Activated naive CD4-positive, alpha-beta T cell treated with anti-CD3 and anti-CD28 coated beads for 36 hours (primary cell): ENCODE measurements at regions of chr9 and their contacts with region 1.

Region 1: DNA sequence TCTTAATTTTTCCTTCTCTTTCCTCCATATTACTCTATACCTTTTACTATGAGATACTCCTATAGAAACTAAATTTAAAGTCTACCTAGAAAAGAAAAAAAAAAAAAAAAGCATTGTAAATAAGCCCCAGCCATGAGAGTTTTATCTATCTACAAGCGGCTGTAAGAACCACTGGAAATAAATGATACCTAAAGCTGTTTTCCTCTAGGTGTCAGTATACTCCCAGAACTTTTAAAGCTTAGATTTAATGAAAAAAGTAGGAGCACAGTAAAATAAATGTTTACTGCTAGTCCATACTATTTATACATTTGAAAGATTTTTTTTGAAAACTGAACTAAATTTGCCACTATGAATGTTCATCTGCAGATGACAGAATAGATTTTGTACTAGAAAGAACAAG is 26.2 kb downstream of the TYRP1 start:
- DNase-seq: no peak
- H3K4me3 Mint-ChIP-seq: no peak overlapping the region
- H3K27ac Mint-ChIP-seq: no peak overlapping the region
- H3K4me1 Mint-ChIP-seq: no peaks in the 10 kb centered on the region
- H3K27me3 Mint-ChIP-seq: no peaks in the 10 kb centered on the region

Region 2: DNA sequence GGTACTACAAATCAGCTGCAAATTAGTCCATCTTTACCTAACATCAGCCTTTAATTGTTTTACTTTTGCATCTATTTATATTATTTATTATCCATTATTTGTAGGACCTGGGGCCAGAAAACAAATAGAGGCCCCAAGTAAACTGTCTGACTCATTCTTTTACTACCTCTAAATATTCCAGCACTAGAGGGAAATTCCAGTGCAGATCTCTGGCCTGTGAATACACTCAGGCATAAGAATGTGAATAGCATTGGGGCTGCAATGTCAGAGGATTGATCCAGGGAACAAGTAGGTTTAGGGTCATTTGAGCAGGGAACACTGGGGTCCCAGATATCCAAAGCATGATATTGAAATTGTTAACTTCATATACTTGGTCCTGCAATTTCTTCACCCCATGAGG is 202.9 kb before region 1 on chr9:
- CTCF ChIA-PET with region 1: no interaction called
- intact Hi-C with region 1: no loop called
- DNase-seq: no peak
- H3K4me3 Mint-ChIP-seq: no peak overlapping the region
- H3K27ac Mint-ChIP-seq: no peak overlapping the region
- H3K4me1 Mint-ChIP-seq: no peaks in the 10 kb centered on the region
- H3K27me3 Mint-ChIP-seq: no peaks in the 10 kb centered on the region

Region 3: DNA sequence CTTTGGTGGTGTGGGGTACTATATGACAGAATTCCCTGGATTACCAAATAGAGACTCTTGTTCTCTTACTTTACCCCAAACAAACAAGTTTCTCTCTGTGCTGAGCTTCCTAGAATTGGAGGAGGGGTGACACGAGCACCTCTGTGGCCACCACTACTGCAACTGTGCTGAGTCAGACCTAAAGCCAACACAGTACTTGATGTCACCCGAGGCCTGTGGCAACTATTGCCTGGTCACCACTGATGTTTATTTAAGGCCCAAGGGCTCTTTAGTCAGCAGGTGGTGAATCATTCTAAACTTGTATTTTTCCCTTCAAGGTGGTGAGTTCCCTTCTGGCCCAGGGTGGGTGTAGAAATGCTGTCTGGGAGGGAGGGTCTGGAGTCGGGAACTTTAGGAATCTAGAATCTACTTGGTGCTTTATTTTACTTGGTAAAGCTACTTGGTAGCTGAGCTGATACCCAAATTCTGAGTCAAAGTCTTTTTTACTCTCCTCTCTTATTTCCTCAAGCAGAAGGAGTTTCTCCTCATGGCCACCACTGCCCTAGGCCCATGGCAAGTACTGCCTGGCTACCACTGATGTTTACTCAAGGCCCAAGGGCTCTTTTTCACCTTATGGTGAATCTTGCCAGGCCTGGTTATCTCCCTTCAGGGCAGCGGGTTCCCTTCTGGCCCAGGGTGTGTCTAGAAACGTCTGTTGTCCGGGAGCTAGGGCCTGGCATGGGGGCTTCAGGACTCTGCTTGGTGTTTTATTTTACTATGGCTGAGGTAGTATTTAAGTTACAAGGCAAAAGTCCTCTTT is 65.2 kb after region 1 on chr9:
- CTCF ChIA-PET with region 1: no interaction called
- intact Hi-C with region 1: no loop called
- DNase-seq: no peak
- H3K4me3 Mint-ChIP-seq: no peak overlapping the region
- H3K27ac Mint-ChIP-seq: no peak overlapping the region
- H3K4me1 Mint-ChIP-seq: no peaks in the 10 kb centered on the region
- H3K27me3 Mint-ChIP-seq: no peaks in the 10 kb centered on the region

Region 4: GRCh38 chr9:13088720-13089427 is 369.4 kb after region 1 on chr9:
- CTCF ChIA-PET with region 1: no interaction called
- intact Hi-C with region 1: loop called (anchors 1 kb)
- DNase-seq: no peak
- H3K4me3 Mint-ChIP-seq: no peak overlapping the region
- H3K27ac Mint-ChIP-seq: no peak overlapping the region
- H3K4me1 Mint-ChIP-seq: no peaks in the 10 kb centered on the region
- H3K27me3 Mint-ChIP-seq: no peaks in the 10 kb centered on the region